ENCODE measurements at regions of chr6 and their contacts with region 1.

Region 1: GRCh38 chr6:138222901-138223546 is 4.7 kb upstream of the PBOV1 start:
- DNase-seq: no peak
- H3K4me3 ChIP-seq: no peak overlapping the region
- H3K27ac ChIP-seq: no peak overlapping the region
- H3K4me1 ChIP-seq: no peaks in the 10 kb centered on the region
- H3K27me3 ChIP-seq: no peaks in the 10 kb centered on the region
- CTCF ChIP-seq: no peak
- POLR2A ChIP-seq: no peak

Region 2: GRCh38 chr6:138211027-138211581 is 11.9 kb before region 1 on chr6:
- intact Hi-C with region 1: loop called (anchors 1 kb)
- DNase-seq: no peak
- H3K4me3 ChIP-seq: no peak overlapping the region
- H3K27ac ChIP-seq: no peak overlapping the region
- H3K4me1 ChIP-seq: no peaks in the 10 kb centered on the region
- H3K27me3 ChIP-seq: no peaks in the 10 kb centered on the region
- CTCF ChIP-seq: no peak
- POLR2A ChIP-seq: no peak

Region 3: GRCh38 chr6:138572167-138572865 is 349.3 kb after region 1 on chr6:
- intact Hi-C with region 1: no loop called
- DNase-seq: peak; percentile 76 to 83
- H3K4me3 ChIP-seq: peak overlapping the region; percentile 37 to 63 (median 46)
- H3K27ac ChIP-seq: peak overlapping the region; percentile 68 to 69
- H3K4me1 ChIP-seq: no peaks in the 10 kb centered on the region
- H3K27me3 ChIP-seq: no peaks in the 10 kb centered on the region
- CTCF ChIP-seq: no peak
- POLR2A ChIP-seq: no peak

Measured in breast epithelium (tissue), 4 donors.